Activated naive CD4-positive, alpha-beta T cell treated with anti-CD3 and anti-CD28 coated beads for 36 hours (primary cell): ENCODE measurements at regions of chr10 and their contacts with region 1.

Region 1: GRCh38 chr10:96831867-96832720 is at the start of gene LCOR:
- DNase-seq: peak; percentile 83
- H3K4me3 Mint-ChIP-seq: peak within 1 kb of the TSS; percentile 88
- H3K27ac Mint-ChIP-seq: peak within 1 kb of the TSS; percentile 94
- H3K4me1 Mint-ChIP-seq: peaks cover 43% of the 10 kb centered on the region
- H3K27me3 Mint-ChIP-seq: no peaks in the 10 kb centered on the region
- total RNA-seq, gene LCOR: 18.1 to 22.9 TPM

Region 2: GRCh38 chr10:96374985-96375830 is 456.9 kb before region 1 on chr10:
- CTCF ChIA-PET with region 1: interaction called, 3 read pairs
- intact Hi-C with region 1: loop called (anchors 1 kb)
- DNase-seq: peak; percentile 89
- H3K4me3 Mint-ChIP-seq: peak overlapping the region; percentile 74
- H3K27ac Mint-ChIP-seq: no peak overlapping the region
- H3K4me1 Mint-ChIP-seq: peaks cover 6% of the 10 kb centered on the region
- H3K27me3 Mint-ChIP-seq: peaks cover 3% of the 10 kb centered on the region

Region 3: DNA sequence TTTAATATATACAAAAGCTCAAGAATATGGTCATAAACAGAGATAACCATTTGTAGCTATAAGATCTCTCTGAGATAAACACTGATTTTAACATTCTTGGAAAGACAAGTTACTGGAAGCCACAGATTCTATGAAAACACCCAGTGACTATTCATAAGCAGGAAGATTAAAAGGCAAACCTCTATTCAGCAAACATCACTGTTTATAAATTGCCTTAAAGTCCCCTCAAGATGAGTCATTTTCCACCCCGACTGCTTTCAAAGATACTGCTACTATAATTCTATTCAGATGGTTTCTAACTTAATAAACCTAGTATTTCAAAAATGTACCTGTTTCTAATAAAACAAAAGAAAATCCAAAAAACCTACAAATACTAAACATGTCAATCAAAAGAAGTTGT is 266.3 kb before region 1 on chr10:
- CTCF ChIA-PET with region 1: interaction called, 5 read pairs
- intact Hi-C with region 1: loop called (anchors 1 kb)
- DNase-seq: no peak
- H3K4me3 Mint-ChIP-seq: no peak overlapping the region
- H3K27ac Mint-ChIP-seq: no peak overlapping the region
- H3K4me1 Mint-ChIP-seq: peaks cover 29% of the 10 kb centered on the region
- H3K27me3 Mint-ChIP-seq: no peaks in the 10 kb centered on the region

Region 4: GRCh38 chr10:96765406-96766240 is 66.5 kb before region 1 on chr10:
- CTCF ChIA-PET with region 1: interaction called, 8 read pairs
- intact Hi-C with region 1: loop called (anchors 1 kb)
- DNase-seq: peak; percentile 86
- H3K4me3 Mint-ChIP-seq: no peak overlapping the region
- H3K27ac Mint-ChIP-seq: no peak overlapping the region
- H3K4me1 Mint-ChIP-seq: peaks cover 2% of the 10 kb centered on the region
- H3K27me3 Mint-ChIP-seq: no peaks in the 10 kb centered on the region

Region 5: GRCh38 chr10:96890172-96890513 is 58.0 kb after region 1 on chr10:
- CTCF ChIA-PET with region 1: no interaction called
- intact Hi-C with region 1: loop called (anchors 5 kb)
- DNase-seq: no peak
- H3K4me3 Mint-ChIP-seq: no peak overlapping the region
- H3K27ac Mint-ChIP-seq: no peak overlapping the region
- H3K4me1 Mint-ChIP-seq: peaks cover 34% of the 10 kb centered on the region
- H3K27me3 Mint-ChIP-seq: no peaks in the 10 kb centered on the region

Region 6: DNA sequence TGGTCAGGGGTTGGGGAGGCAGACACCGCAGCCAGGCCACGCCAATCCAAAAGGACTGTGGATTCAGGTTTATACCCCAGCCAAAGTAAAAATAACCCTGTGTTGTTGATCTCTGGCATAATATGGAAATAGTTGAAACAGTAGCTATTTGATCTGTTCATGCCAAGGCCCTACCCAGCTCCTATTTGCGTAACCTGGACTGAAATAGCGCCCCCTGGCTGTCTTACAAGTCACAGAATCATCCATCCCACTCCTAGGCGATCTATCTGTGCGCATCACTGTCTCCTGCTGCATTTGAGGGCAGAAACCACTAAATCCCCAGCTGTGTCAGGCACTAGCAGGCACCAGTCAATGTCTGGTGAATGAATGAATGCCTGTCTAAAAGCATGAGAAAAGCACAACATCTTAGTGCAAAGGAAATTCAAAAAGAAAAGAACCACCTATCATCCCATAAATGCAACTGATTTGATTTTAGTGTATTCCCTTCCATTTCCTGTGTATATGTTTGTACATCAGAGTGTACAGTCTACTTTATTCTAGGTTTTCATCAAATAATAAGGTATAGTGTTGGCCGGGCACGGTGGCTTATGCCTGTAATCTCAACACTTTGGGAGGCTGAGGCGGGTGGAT is 193.6 kb after region 1 on chr10:
- CTCF ChIA-PET with region 1: interaction called, 7 read pairs
- intact Hi-C with region 1: loop called (anchors 2 kb)
- DNase-seq: peak; percentile 80
- H3K4me3 Mint-ChIP-seq: no peak overlapping the region
- H3K27ac Mint-ChIP-seq: no peak overlapping the region
- H3K4me1 Mint-ChIP-seq: peaks cover 2% of the 10 kb centered on the region
- H3K27me3 Mint-ChIP-seq: no peaks in the 10 kb centered on the region

Region 7: DNA sequence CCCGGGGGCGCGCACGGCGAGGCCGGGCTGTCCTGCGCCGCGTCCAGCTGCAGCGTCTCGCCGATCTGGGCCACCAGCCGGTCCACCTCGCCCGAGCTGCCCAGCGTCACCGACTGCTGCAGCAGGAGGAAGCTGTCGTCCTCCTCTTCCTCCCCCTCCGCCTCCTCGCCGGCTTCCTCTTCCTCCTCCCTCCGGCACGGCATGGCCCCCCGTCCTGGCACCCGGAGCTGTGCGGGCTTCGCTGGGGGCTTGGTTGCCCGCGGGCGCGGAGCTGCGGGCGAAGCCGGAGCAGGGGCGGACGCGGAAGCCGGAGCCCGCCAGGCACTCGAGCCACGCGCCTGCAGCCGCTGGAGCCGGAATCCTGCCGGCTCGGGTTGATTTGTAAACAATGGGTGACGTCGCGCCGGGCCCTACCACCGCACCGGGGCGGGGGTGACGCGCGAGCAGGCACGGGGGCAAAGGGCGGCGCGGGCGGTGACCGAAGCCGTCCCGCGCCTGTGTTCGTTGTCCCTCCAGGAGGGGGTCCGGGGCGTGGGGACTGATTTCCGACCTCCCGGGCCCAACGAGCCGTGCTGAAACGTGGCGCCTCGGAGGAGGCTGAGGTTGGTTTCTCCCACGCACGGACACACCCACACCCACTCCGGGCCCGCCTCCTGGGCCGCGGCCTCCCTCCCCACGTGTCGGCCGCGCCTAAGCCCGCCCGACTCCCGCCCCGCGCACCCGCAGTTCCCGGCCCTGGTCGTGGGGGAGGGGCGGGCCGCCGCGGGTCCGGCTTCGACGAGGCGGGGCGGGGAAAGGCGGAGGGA is 502.5 kb after region 1 on chr10 and contains the start of gene FRAT2:
- CTCF ChIA-PET with region 1: no interaction called
- intact Hi-C with region 1: loop called (anchors 10 kb)
- DNase-seq: peak; percentile 87
- H3K4me3 Mint-ChIP-seq: peak within 1 kb of the TSS; percentile 75
- H3K27ac Mint-ChIP-seq: peak within 1 kb of the TSS; percentile 86
- H3K4me1 Mint-ChIP-seq: peaks cover 32% of the 10 kb centered on the region
- H3K27me3 Mint-ChIP-seq: no peaks in the 10 kb centered on the region
- total RNA-seq, gene FRAT2: 5.1 to 5.6 TPM